ENCODE measurements at regions of chr7 and their contacts with region 1.

Region 1: DNA sequence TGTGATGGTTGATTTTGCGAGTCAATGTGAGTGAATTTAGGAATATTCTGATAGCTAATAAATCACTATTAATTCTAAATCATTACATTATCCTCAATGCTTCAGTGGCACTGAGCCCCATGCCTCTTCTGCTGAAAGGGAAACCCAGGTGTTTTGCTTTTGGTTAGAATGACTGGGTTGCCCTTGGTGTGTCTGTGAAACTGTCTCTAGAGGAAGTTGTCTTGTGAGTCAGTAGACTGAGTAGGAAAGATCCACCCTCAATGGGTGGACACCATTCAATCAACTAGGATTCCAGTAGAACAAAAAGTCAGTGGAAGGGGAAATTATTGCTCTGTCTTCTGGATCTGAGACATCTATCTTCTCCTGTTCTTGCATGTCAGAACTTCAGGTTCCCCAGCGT is 472.4 kb downstream of the ANKRD7 start:
- DNase-seq: no peak

Region 2: GRCh38 chr7:117659453-117660086 is 1037.3 kb before region 1 on chr7:
- intact Hi-C with region 1: no loop called
- DNase-seq: no peak

Region 3: DNA sequence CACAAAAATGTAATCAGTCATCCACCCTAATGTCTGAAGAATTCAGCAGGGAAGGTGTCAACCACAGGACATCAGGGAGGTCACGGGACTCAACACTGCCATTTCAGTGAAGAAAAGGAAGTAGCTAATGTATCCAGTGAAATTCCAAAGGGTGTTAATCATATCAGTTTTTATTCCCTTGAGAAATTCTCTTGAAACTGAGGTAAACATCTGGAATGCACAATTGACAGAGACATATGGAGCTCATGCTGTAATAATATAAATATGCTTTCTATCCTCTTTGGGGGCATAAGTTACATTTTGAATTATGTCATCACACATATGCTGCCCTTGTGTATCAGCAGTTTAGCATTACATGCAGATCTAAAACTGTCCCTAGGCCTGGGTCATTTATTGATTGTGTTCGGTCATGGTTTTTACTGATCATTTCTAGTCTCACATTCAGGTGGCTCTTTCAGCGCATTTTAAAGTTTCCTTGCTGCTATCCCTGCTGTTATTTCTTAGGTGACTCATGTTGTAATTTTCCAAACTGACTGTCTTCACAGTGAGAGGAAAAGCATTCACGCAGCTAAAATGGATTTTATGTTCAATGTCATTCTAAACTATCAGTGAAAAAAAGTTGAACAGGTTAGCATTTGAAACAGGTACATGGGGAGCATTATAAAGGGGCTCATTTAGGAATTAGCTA is 1887.2 kb after region 1 on chr7:
- intact Hi-C with region 1: loop called in 1 of 2 experiments (anchors 5 kb)
- DNase-seq: no peak

Measured in posterior vena cava (tissue), 2 donors.